ENCODE measurements at regions of chr16 and their contacts with region 1.

Region 1: DNA sequence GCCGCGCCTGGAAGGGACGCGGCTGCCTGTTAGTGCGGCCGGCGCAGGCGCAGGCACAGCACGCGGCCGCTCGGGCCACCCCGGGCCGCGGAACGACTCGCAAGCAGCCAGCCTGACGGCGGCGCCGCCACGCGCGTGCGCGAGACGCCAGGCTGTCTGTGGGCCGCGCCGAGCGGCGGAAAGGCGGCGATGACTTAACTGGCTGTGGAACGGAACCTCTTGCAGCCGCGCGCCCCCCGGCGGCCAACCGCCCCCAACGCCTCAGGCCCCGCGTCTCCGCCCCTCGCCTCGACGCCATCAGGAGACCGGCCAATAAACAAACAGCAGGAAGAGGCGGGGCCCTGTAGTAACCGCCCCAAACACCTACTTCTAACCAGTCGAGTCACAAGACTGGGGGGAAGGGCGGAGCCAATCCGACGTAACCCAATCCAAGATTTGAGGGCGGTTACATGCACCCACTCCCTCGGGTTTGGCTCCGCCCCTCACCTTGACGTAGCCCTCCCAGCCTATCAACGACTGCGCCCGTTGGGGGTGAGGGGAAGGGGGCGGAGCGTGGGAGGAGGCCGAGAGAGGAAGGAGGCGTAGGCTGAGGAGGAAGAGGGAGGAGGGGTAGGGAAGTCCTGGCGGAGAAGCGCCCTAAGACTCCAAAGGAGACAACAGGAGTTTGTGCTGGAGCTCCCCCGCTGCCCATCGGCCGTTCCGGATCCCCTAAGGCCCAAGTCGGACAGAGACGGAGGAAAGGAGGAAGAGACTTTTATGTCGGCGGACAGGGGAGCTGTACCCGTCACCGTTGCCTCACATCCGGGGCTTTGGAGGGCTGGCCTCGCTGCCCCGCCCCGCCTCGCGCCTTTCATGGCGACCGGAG is at the start of gene FBRS:
- DNase-seq: peak; percentile 100
- H3K4me3 ChIP-seq: peak within 1 kb of the TSS; percentile 40 to 90 (median 59)
- H3K27ac ChIP-seq: peak within 1 kb of the TSS; percentile 96
- H3K4me1 ChIP-seq: peaks cover 21% of the 10 kb centered on the region
- H3K27me3 ChIP-seq: no peaks in the 10 kb centered on the region
- CTCF ChIP-seq: peak; percentile 91 to 98
- POLR2A ChIP-seq: peak; percentile 87
- total RNA-seq, gene FBRS: 68.6 and 72.5 TPM in 2 replicates

Region 2: DNA sequence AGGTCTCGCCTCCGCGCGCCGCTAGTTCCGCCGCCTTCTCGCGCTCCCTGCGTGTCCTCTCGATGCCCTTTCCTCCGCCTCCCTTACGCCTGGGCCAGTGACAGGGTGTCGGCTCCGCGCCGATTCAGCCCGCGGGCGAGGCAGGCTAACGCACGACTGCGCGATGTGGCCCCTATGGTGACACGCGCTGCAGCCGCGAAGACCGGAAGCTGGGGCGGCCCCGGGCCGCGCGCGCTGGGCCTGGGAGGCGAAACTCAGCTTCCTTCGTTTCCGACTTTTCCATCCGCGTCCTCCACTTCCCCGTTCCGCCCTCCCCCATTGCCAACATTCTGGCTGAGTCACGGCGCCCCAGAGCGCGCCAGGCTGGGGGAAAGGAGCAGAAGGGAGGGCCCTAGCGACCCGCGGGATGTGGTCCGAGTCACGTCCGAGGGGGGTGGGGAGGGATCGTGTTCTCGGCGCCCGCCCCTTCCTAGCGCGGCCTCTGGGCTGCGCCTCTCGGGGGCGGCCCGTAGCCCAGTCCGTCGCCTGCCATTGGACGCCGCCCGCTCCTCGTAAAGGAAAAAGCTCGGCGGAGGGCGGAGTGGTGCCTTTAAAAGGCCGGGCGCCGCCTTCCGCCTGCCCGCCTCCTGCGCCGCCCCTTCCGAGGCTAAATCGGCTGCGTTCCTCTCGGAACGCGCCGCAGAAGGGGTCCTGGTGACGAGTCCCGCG is 592.8 kb before region 1 on chr16 and contains the start of gene ALDOA:
- CTCF ChIA-PET with region 1: no interaction called
- POLR2A ChIA-PET with region 1: no interaction called
- dilution Hi-C with region 1: no loop called
- intact Hi-C with region 1: loop called (anchors 1 kb)
- DNase-seq: peak; percentile 99
- H3K4me3 ChIP-seq: peak within 1 kb of the TSS; percentile 71 to 95 (median 91)
- H3K27ac ChIP-seq: peak within 1 kb of the TSS; percentile 78
- H3K4me1 ChIP-seq: peaks cover 29% of the 10 kb centered on the region
- H3K27me3 ChIP-seq: no peaks in the 10 kb centered on the region
- CTCF ChIP-seq: no peak
- POLR2A ChIP-seq: peak; percentile 98
- total RNA-seq, gene ALDOA: 1,029 and 1,114 TPM in 2 replicates

Region 3: DNA sequence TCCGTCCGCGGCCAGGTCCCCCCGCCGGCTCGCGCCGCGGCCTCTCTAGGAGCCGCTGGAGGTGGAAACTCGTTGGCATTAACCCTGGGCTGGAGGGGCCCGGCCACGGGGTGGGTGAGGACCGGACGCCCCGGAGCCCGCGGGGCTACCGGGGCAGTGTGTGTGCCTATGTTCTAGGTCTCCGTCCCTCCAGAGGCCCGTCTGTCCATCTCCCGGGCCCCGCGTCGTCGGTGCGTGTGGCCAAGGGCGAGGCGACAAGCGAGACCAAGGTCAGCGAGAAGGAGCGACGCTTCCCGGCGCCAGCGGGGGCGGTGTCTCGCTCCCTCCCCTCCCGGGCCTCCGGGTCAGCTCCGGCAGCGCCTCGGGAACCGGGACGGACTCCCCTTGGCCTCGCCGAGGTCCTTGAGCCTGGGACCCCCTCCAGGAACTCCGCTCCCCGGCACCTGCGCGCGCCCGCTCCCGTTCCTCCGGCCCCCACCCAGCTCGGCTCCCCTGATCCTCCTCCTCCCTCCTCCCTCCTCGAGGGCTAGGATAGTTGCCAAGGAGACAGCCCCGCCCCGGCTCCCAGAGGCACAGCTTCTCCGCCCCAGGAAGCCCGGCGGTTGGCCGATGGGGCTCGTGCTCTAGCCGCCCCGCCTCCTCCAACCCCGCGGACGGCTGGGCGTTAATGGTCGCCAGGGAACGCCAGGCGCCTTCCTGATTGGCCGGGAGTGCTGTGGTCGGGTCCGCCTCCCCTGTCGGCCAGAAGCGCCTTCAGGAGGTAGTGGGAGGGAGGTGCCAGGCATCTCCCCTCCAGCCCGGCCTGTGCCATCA is 131.1 kb before region 1 on chr16:
- CTCF ChIA-PET with region 1: no interaction called
- POLR2A ChIA-PET with region 1: no interaction called
- dilution Hi-C with region 1: no loop called
- intact Hi-C with region 1: loop called (anchors 5 kb)
- DNase-seq: peak; percentile 98
- H3K4me3 ChIP-seq: peak overlapping the region; percentile 58 to 67 (median 65)
- H3K27ac ChIP-seq: peak overlapping the region; percentile 80
- H3K4me1 ChIP-seq: peaks cover 4% of the 10 kb centered on the region
- H3K27me3 ChIP-seq: no peaks in the 10 kb centered on the region
- CTCF ChIP-seq: peak; percentile 13 to 56
- POLR2A ChIP-seq: peak; percentile 58

Region 4: DNA sequence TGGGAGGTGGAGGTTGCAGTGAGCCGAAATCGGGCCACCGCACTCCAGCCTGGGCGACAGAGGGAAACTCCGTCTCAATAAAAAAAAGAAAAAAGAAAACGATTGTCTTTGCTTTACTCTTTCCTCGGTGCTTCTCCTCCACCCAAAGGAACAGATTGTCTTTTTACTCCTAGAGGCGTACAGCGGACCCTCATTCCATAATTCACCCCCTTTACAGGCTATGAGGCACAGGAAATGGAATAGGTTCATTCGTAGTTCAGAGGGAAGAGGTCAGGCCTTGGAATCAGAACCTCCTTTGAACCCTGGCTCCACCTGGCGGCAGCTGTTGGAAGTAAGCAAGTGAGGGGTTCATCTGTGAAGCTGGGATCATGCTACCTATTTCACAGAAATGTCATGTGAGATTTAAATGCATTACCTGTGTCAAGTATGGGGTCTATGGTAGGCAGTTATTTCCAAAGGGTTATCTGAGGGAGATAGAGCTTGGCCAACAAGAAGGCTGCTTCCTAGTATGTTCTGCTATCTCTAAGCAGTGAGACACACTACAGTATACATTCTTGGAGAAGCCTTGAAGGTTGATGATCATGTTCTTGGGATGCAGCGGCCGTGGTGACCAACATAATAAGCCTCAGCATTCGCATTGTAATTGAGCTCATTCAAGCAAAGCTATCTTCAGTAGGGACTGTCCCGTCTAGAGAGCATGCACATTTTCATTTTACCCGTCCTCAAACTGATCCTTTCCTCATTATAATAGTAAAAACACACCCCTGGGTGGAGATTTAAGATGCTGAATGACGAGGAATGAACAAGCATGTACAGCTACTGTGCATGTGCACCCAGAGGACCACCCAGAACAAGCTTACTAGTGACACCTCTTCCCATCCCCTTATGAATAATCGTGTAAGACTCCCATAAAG is 29.2 kb before region 1 on chr16:
- CTCF ChIA-PET with region 1: interaction called, 3 read pairs
- POLR2A ChIA-PET with region 1: no interaction called
- dilution Hi-C with region 1: no loop called
- intact Hi-C with region 1: loop called (anchors 2 kb)
- DNase-seq: peak; percentile 77
- H3K4me3 ChIP-seq: peak overlapping the region in 1 of 3 experiments; percentile 27
- H3K27ac ChIP-seq: no peak overlapping the region
- H3K4me1 ChIP-seq: peaks cover 3% of the 10 kb centered on the region
- H3K27me3 ChIP-seq: peaks cover 2% of the 10 kb centered on the region in 2 experiments
- CTCF ChIP-seq: peak; percentile 85 to 91
- POLR2A ChIP-seq: no peak

Region 5: DNA sequence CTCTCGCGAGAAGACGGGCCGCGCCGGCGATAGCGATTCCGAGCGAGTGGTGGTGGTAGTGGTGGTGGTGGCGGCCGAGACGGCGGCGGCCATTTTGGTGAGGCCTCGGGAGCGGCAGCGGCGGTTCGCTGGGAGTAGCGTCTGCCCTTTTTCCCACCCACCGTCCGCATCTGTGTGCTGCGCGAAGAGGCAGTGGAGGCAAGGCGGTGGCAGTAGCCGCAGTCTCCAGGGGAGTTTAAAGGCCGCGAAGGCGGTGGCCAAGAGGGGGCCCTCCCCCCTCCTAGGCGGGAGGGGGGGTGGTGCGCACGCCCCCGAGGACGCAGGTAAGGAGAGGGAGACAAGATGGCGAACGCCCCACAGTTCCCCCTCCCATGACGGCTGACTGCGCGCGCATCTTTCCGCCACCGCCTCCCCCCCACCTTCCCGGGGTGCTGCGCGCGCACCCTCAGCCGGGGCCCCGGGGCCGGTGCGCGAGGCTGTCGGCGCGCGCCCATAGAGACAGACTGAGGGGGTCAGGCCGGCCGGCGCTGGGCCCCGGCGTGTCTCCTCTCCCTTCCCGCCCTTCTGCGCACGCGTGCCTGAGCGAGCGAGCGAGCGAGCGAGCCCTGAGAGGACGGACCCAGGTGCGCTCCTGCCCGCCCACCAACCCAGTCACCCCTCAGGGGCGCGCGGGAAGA is 40.2 kb after region 1 on chr16:
- CTCF ChIA-PET with region 1: interaction called, 26 read pairs
- POLR2A ChIA-PET with region 1: interaction called, 5 read pairs
- dilution Hi-C with region 1: no loop called
- intact Hi-C with region 1: loop called (anchors 1 kb)
- DNase-seq: peak; percentile 96
- H3K4me3 ChIP-seq: peak overlapping the region; percentile 49 to 99 (median 77)
- H3K27ac ChIP-seq: peak overlapping the region; percentile 94
- H3K4me1 ChIP-seq: peaks cover 26% of the 10 kb centered on the region
- H3K27me3 ChIP-seq: no peaks in the 10 kb centered on the region
- CTCF ChIP-seq: no peak
- POLR2A ChIP-seq: peak; percentile 94